ENCODE measurements at regions of chr2 and their contacts with region 1.

Region 1: DNA sequence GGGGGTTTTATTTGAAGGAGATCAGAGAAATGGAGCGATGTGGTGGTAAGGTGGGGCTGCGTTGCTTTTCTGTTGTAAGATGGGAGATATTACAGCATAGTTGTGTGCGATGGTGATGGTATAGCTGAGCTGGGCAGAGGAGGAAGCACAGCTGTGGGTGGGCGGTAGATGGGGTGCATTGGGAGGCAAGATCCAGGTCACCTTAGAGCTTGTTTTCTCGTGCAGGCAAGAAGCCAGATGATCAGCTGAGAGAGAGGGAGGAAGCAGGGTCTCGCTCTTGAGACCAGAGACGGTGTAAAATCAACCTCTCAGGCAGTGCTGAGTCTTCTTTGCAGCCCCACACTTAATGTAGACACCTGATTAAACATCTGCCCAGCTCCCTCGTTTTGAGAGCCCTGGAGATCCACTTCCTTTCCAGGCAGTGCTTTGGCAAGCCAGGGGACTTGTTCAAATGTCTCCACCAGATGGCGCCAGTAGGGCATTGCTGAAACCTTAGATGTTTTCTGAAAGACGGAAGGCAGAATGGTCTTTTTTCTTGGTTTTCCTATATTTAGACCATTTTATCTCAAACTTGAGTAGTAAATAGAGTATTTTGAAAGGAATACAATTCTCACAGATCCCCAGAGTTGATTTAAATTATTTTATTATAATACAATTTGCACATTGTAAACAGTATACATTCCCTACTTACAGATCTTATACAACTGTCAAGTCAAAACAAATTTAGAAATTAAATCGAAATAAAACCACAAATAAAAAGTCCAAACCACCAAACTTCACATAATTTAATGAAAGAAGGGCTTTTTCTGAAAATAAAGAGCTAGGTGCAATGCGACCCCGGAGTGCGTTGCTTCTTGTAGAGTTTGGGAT is 21.1 kb upstream of the LYPD6B start:
- DNase-seq: peak; percentile 77 to 89 (median 77)
- ATAC-seq: peak; percentile 73 to 74
- H3K4me3 ChIP-seq: no peak overlapping the region
- H3K27ac ChIP-seq: no peak overlapping the region
- H3K4me1 ChIP-seq: peaks cover 1% of the 10 kb centered on the region
- H3K27me3 ChIP-seq: no peaks in the 10 kb centered on the region

Region 2: DNA sequence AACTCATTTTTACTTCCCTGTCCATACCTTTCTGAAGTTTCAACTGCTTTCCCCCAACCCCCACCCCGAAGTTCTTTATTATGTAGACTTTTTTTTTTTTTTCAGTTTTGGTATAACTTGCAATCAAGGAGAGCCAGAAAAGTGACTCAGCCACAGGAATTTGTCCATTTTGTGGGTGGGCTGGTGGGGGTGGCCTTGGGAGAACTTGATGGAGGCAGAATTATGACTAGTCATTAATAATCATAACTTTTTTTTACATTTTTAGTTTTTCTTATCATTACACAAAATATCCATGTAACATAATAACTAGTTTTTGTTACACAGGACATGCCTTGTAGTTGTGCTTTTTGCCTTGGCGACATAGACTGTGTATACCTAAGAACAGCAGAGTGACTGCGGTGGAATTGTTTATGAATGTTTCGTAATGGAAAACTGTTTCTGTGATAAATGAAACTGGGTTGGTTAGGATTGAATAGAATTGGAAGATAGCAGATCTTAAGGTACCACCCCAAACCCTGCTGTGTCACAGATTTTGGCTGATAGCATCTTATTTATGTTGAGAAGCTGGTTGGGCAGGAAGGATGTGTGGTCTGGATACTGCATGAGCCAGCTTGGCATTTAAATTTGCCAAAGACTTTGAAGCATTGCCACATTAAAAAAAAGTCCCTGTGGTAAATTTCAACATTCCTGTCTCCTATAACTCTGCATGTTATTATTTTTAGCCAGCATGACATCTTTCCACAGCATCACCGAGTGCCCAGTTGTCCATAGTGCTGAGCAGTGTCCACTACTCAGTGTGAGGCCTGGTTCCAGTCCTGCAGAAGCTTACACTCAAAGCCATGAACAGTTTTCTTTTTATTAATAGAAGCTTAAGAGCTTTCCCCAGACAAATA is 51.9 kb after region 1 on chr2:
- intact Hi-C with region 1: no loop called
- DNase-seq: no peak
- ATAC-seq: peak in 1 of 2 donors; percentile 68
- H3K4me3 ChIP-seq: no peak overlapping the region
- H3K27ac ChIP-seq: no peak overlapping the region
- H3K4me1 ChIP-seq: no peaks in the 10 kb centered on the region
- H3K27me3 ChIP-seq: no peaks in the 10 kb centered on the region

Region 3: DNA sequence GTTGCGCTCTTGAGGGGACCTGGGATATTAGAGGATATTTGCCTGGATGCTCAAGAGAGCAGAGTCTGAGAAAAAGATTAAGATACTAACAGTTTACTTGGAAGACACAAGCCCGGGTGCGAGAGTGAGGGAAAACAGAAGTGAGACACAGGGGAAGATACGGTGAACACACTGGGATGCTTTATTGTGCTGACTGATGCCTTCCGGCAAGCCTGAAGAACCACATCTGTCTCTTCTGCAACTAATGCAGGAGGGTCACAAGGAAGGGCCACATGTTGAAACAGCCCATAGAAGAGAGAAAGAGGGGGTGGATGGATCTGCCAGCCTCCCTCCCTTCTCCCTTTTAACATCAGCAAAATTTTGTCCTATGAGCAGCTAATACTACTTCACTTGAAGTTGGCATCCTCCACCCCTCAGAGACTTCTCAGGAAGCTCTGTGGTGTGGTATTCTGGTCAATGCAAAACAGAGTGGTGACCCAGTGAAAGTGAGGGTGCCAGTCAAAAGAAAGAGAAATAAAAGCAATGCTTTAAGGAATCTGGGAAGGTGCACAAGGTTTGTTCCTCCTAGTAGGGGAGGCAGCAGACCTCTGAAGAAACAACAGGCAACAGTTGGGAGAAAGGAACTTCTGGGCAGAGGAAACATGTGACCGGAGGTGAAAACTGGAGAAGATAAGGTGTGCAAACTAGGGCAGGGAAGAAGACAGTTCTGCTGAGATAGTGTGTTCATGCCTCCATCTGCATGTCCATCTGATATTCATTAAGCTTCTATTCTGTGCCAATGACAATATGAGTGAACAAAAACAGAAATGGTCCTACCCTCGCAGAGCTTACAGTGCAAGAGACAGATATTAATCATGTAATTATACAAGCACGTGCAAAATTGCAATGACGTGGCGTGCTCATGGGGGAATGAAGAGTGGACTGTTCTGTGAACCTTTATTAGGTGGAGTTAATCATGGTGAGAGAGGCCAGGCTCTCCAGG is 128.3 kb after region 1 on chr2:
- intact Hi-C with region 1: no loop called
- DNase-seq: no peak
- ATAC-seq: no peak
- H3K4me3 ChIP-seq: no peak overlapping the region
- H3K27ac ChIP-seq: no peak overlapping the region
- H3K4me1 ChIP-seq: no peaks in the 10 kb centered on the region
- H3K27me3 ChIP-seq: no peaks in the 10 kb centered on the region

Region 4: DNA sequence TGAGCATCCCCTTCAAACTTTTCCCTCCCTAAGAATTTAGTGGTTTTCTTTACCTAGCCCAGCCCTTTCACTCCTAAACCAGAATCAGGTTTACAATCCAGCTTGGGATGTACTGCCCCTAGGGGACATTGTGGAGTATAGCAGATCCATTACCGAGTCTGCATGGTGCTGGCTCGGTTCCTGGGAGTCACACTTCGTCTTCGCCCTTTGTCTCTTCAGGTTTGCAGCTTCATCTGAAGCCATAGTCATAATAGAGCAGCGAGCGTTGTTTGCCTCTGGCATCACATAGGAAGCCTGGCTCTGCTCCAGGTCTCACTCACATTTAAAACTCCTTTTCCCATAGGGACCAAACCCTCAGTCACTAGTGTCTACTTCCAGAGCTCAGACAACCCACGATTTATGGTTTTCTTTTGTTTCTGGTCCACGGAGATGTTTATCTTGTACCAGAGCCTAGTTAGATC is 296.2 kb after region 1 on chr2:
- intact Hi-C with region 1: loop called in 3 of 4 experiments (anchors 5 to 10 kb)
- DNase-seq: peak in 2 of 3 donors; percentile 18 to 45
- ATAC-seq: peak; percentile 64 to 69
- H3K4me3 ChIP-seq: no peak overlapping the region
- H3K27ac ChIP-seq: no peak overlapping the region
- H3K4me1 ChIP-seq: no peaks in the 10 kb centered on the region
- H3K27me3 ChIP-seq: no peaks in the 10 kb centered on the region

Region 5: GRCh38 chr2:149561309-149561926 is 544.1 kb after region 1 on chr2:
- intact Hi-C with region 1: loop called (anchors 5 kb)
- DNase-seq: no peak
- ATAC-seq: no peak
- H3K4me3 ChIP-seq: no peak overlapping the region
- H3K27ac ChIP-seq: no peak overlapping the region
- H3K4me1 ChIP-seq: no peaks in the 10 kb centered on the region
- H3K27me3 ChIP-seq: no peaks in the 10 kb centered on the region

Measured in right cardiac atrium (tissue), 5 donors.